ENCODE measurements at regions of chr18 and their contacts with region 1.

Region 1: DNA sequence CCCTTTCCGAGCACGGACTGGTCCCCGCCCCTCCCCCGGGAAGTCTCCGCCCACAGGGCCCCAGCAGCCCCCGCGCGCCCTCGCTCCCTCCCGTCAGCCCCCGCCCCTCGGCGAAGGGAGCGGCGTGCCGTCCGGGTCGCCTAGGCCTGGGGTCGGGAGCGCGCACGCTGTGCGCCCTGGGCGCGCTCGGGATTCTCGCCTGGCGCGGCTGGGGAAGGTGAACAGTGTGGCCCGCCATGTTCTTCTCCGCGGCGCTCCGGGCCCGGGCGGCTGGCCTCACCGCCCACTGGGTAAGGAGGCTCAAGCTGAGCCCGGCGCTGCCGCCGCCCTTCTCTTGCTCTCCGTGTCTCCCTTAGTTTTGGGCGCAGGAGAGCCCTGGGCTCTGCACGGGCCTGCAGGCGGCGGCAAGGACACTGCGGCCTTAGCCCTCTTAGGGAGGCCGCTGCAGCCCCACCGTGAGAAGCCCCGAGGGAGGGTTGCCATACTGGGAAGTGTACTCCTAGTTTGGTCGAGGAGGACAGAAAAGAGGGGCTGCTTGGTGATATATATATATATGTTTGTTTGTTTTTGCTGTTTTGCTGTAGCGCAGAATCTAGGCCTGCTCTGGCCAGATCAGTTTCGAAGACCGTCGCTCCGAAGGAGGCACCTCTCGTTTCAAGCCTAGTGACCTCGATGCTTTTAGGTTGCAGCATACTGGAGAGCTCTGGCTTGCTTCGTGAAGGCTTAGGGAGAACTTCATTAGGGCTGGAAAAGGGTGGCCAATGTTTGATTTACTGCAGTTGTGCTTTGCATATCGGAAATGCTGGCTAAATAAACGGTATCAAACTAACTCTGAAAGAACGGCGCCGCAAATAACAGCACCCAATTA is at the start of gene NDUFV2:
- DNase-seq: peak; percentile 99
- ATAC-seq: peak; percentile 99
- total RNA-seq, gene NDUFV2: 533 TPM

Region 2: GRCh38 chr18:9136315-9137155 is 33.8 kb after region 1 on chr18 and contains the start of gene ANKRD12:
- intact Hi-C with region 1: loop called (anchors 1 kb)
- DNase-seq: peak; percentile 99
- ATAC-seq: peak; percentile 98
- total RNA-seq, gene ANKRD12: 44.1 TPM

Measured in Right ventricle myocardium inferior (tissue), 1 donor.